Activated naive CD4-positive, alpha-beta T cell treated with anti-CD3 and anti-CD28 coated beads, Interleukin-2, amount 10 ng/mL, durations not matched to agents 7 days and 5 days (primary cell): ENCODE measurements at regions of chr10 and their contacts with region 1.

Region 1: GRCh38 chr10:80444646-80445319 is 9.3 kb upstream of the TSPAN14 start:
- DNase-seq: peak; percentile 85
- H3K4me3 Mint-ChIP-seq: no peak overlapping the region
- H3K27ac Mint-ChIP-seq: no peak overlapping the region
- H3K4me1 Mint-ChIP-seq: peaks cover 60% of the 10 kb centered on the region
- H3K27me3 Mint-ChIP-seq: peaks cover 9% of the 10 kb centered on the region

Region 2: GRCh38 chr10:80333983-80334382 is 110.8 kb before region 1 on chr10:
- CTCF ChIA-PET with region 1: no interaction called
- DNase-seq: no peak
- H3K4me3 Mint-ChIP-seq: no peak overlapping the region
- H3K27ac Mint-ChIP-seq: no peak overlapping the region
- H3K4me1 Mint-ChIP-seq: no peaks in the 10 kb centered on the region
- H3K27me3 Mint-ChIP-seq: peaks cover 7% of the 10 kb centered on the region

Region 3: GRCh38 chr10:80431577-80431976 is 13.2 kb before region 1 on chr10:
- CTCF ChIA-PET with region 1: interaction called, 29 read pairs
- DNase-seq: no peak
- H3K4me3 Mint-ChIP-seq: no peak overlapping the region
- H3K27ac Mint-ChIP-seq: no peak overlapping the region
- H3K4me1 Mint-ChIP-seq: no peaks in the 10 kb centered on the region
- H3K27me3 Mint-ChIP-seq: peaks cover 4% of the 10 kb centered on the region

Region 4: DNA sequence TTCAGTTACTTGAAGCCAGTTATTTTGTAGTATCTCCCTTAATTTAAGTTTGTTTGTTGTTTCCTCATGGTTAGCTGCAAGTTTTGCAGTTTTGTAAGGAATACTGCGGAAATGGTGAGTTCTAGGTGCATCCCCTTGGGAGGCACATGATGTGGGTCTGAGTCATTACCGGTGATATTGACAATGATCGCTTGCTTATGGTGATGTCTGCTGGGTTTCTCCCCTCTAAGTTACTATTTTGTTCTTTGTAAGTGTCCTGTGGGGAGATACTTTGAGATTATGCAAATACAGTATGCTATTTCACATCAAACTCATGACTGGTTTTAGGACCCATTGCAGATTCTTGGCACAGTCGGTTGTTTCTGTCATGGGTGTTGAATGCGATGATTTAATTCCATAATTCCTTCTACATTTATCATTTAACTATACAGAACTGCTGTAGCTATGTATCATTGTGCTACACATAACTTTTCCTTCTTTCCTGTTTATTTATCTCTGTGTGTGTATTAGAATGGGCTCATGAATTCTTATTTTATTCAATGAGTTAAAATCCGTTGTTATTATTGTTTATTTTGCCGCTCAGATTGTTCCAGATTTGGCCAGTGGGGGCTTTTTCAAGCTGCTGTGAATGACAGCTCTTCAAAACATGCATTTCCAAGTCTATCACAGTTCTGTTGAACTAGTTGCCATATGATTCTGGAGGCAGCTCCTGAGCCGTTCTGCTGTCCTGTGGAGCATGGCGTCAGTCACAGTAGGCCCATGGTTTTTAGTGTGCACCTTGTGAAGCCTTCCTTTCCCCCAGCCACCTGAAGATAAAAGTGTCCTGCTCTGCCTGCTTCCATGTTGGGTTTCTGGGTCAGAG is 27.7 kb after region 1 on chr10:
- CTCF ChIA-PET with region 1: interaction called, 10 read pairs
- DNase-seq: no peak
- H3K4me3 Mint-ChIP-seq: peak overlapping the region; percentile 49
- H3K27ac Mint-ChIP-seq: peak overlapping the region; percentile 85
- H3K4me1 Mint-ChIP-seq: peaks cover 88% of the 10 kb centered on the region
- H3K27me3 Mint-ChIP-seq: no peaks in the 10 kb centered on the region

Region 5: GRCh38 chr10:80498833-80499741 is 54.3 kb after region 1 on chr10:
- CTCF ChIA-PET with region 1: interaction called, 986 read pairs
- DNase-seq: peak; percentile 57
- H3K4me3 Mint-ChIP-seq: peak overlapping the region; percentile 46
- H3K27ac Mint-ChIP-seq: peak overlapping the region; percentile 94
- H3K4me1 Mint-ChIP-seq: peaks cover 98% of the 10 kb centered on the region
- H3K27me3 Mint-ChIP-seq: no peaks in the 10 kb centered on the region

Region 6: GRCh38 chr10:80599424-80599847 is 154.7 kb after region 1 on chr10:
- CTCF ChIA-PET with region 1: interaction called, 15 read pairs
- DNase-seq: peak; percentile 59
- H3K4me3 Mint-ChIP-seq: no peak overlapping the region
- H3K27ac Mint-ChIP-seq: no peak overlapping the region
- H3K4me1 Mint-ChIP-seq: no peaks in the 10 kb centered on the region
- H3K27me3 Mint-ChIP-seq: peaks cover 7% of the 10 kb centered on the region

Region 7: DNA sequence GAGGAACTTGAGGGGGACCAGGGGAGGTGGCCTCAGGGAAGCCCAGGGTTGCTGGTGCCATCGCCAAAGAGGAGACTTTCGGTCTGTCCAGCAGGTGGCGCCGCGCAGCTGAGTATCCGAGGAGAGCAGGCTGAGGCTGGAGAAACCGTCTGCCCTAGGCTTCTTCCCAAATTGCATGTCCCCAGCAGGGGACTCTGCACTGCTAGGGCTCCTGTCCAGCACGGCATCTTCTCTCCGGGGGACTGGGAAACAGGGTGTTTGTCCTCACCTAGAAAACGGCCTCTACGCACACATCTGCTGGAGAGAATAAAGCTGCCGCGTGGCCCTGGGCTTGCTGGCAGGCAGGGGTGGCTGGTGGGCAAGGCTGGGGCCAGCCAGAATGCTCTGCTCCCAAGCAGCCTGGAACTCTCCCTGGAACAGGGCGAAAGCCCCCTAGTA is 254.8 kb after region 1 on chr10:
- CTCF ChIA-PET with region 1: interaction called, 11 read pairs
- DNase-seq: peak; percentile 80
- H3K4me3 Mint-ChIP-seq: no peak overlapping the region
- H3K27ac Mint-ChIP-seq: no peak overlapping the region
- H3K4me1 Mint-ChIP-seq: no peaks in the 10 kb centered on the region
- H3K27me3 Mint-ChIP-seq: peaks cover 12% of the 10 kb centered on the region